Activated CD4-positive, alpha-beta T cell treated with anti-CD3 and anti-CD28 coated beads, Interleukin-2, amount 10 ng/mL, durations not matched to agents 24 days and 14 days (primary cell): ENCODE measurements at regions of chr6 and their contacts with region 1.

Region 1: GRCh38 chr6:80106418-80107235 is at the start of gene BCKDHB:
- DNase-seq: peak; percentile 99
- H3K4me3 Mint-ChIP-seq: peak within 1 kb of the TSS; percentile 89
- H3K27ac Mint-ChIP-seq: peak within 1 kb of the TSS; percentile 94
- H3K4me1 Mint-ChIP-seq: peaks cover 18% of the 10 kb centered on the region
- H3K27me3 Mint-ChIP-seq: peaks cover 9% of the 10 kb centered on the region
- total RNA-seq, gene BCKDHB: 15.6 and 16.5 TPM in 2 replicates

Region 2: GRCh38 chr6:79949233-79949632 is 157.4 kb before region 1 on chr6:
- intact Hi-C with region 1: loop called (anchors 5 kb)
- DNase-seq: peak; percentile 89
- H3K4me3 Mint-ChIP-seq: no peak overlapping the region
- H3K27ac Mint-ChIP-seq: no peak overlapping the region
- H3K4me1 Mint-ChIP-seq: peaks cover 18% of the 10 kb centered on the region
- H3K27me3 Mint-ChIP-seq: peaks cover 45% of the 10 kb centered on the region

Region 3: GRCh38 chr6:80010289-80010688 is 96.3 kb before region 1 on chr6:
- intact Hi-C with region 1: no loop called
- DNase-seq: no peak
- H3K4me3 Mint-ChIP-seq: no peak overlapping the region
- H3K27ac Mint-ChIP-seq: no peak overlapping the region
- H3K4me1 Mint-ChIP-seq: peaks cover 27% of the 10 kb centered on the region
- H3K27me3 Mint-ChIP-seq: no peaks in the 10 kb centered on the region

Region 4: GRCh38 chr6:80163658-80164187 is 57.1 kb after region 1 on chr6:
- intact Hi-C with region 1: loop called (anchors 1 kb)
- DNase-seq: peak; percentile 73
- H3K4me3 Mint-ChIP-seq: no peak overlapping the region
- H3K27ac Mint-ChIP-seq: no peak overlapping the region
- H3K4me1 Mint-ChIP-seq: peaks cover 15% of the 10 kb centered on the region
- H3K27me3 Mint-ChIP-seq: no peaks in the 10 kb centered on the region